Mammary epithelial cell (primary cell): ENCODE measurements at regions of chr15 and their contacts with region 1.

Region 1: GRCh38 chr15:40421246-40422157 is 15.9 kb downstream of the IVD start:
- DNase-seq: peak; percentile 57
- H3K4me3 ChIP-seq: peak overlapping the region in 1 of 3 experiments; percentile 24
- H3K27ac ChIP-seq: no peak overlapping the region
- H3K4me1 ChIP-seq: peaks cover 22% of the 10 kb centered on the region
- H3K27me3 ChIP-seq: no peaks in the 10 kb centered on the region
- CTCF ChIP-seq: peak; percentile 76 to 96

Region 2: DNA sequence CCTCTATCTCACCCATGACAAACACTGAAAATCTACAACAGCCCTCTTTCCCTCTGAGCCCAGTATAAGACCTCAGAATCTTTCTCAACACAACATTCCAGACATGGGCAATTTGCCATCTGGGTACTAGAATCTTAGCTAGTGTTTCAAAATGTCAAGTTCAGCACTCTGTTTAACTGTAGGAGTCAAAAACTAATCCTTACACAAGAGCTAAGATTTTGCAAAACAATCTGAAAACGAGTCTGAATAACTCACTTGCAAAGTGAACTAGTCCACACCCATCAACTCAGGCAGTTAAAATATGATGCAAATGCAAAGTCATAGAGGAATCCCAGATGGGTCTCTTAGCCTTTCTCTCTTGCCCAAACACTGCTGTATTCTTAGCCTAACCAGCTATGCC is 569.3 kb before region 1 on chr15:
- CTCF ChIA-PET with region 1: no interaction called
- dilution Hi-C with region 1: no loop called
- in situ Hi-C with region 1: no loop called
- intact Hi-C with region 1: no loop called
- DNase-seq: no peak
- H3K4me3 ChIP-seq: no peak overlapping the region
- H3K27ac ChIP-seq: no peak overlapping the region
- H3K4me1 ChIP-seq: peaks cover 2% of the 10 kb centered on the region
- H3K27me3 ChIP-seq: no peaks in the 10 kb centered on the region
- CTCF ChIP-seq: no peak

Region 3: GRCh38 chr15:40217159-40217824 is 204.2 kb before region 1 on chr15:
- CTCF ChIA-PET with region 1: no interaction called
- dilution Hi-C with region 1: no loop called
- in situ Hi-C with region 1: no loop called
- intact Hi-C with region 1: loop called (anchors 1 kb)
- DNase-seq: peak; percentile 48
- H3K4me3 ChIP-seq: no peak overlapping the region
- H3K27ac ChIP-seq: no peak overlapping the region
- H3K4me1 ChIP-seq: no peaks in the 10 kb centered on the region
- H3K27me3 ChIP-seq: no peaks in the 10 kb centered on the region
- CTCF ChIP-seq: peak; percentile 79 to 81

Region 4: DNA sequence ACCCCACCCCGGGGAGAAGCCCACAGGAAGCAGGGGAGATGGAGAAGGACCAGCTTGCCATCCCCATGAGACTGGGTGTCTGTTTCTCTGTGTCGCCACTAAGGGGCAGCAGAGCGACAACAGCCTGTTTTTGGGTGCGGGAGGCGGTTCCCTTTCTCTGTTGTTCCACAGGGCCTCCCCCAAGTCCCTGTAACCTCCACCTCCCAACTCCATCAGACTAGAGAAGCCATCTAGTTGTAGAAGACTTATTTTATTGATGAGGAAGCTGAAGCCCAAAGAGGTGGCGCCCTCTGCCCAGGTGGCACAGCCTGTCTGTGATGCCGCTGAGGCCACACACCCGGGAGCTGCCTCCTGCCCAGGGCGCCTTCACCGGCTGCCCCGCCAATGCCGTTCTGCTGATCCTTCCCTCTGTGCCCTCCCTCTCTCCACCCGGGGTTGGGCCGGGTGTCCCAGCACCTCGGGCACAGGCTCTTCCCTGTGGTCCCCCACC is 76.8 kb before region 1 on chr15:
- CTCF ChIA-PET with region 1: no interaction called
- dilution Hi-C with region 1: no loop called
- in situ Hi-C with region 1: no loop called
- intact Hi-C with region 1: loop called (anchors 1 kb)
- DNase-seq: peak; percentile 45
- H3K4me3 ChIP-seq: no peak overlapping the region
- H3K27ac ChIP-seq: no peak overlapping the region
- H3K4me1 ChIP-seq: peaks cover 50% of the 10 kb centered on the region
- H3K27me3 ChIP-seq: no peaks in the 10 kb centered on the region
- CTCF ChIP-seq: peak; percentile 82 to 83

Region 5: GRCh38 chr15:40367686-40368611 is 53.6 kb before region 1 on chr15:
- CTCF ChIA-PET with region 1: no interaction called
- dilution Hi-C with region 1: no loop called
- in situ Hi-C with region 1: no loop called
- intact Hi-C with region 1: loop called (anchors 1 kb)
- DNase-seq: peak; percentile 88
- H3K4me3 ChIP-seq: no peak overlapping the region
- H3K27ac ChIP-seq: no peak overlapping the region
- H3K4me1 ChIP-seq: peaks cover 19% of the 10 kb centered on the region
- H3K27me3 ChIP-seq: no peaks in the 10 kb centered on the region
- CTCF ChIP-seq: peak; percentile 60 to 64